Right cardiac atrium (tissue), 5 donors: ENCODE measurements at regions of chr21 and their contacts with region 1.

Region 1: DNA sequence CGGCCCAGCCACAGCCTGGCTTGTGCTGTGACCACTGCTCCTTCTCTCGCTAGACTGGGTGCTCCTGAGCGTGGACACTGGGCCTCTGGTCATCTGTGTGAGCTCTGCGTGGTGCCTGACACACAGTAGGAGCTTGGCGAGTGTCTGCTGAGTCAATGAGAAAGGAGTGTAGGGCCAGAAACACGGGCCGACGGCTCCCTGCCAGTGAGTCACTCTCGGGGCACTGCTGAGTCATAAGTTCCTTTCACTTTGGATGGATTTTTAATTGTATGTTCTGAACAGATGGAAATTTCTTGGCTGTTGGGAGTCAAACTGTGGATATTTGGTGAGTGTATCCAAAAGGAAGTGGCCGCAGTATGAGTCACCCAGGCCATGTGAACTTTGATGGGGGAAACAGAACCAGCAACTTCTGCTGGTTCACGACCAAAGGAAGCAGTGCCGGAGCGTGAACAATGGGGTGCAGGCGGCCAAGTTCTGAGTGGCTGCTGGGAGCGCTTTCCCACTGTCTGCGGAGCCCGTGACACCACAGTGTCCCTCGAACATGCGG is 41.0 kb upstream of the COL18A1 start:
- DNase-seq: peak; percentile 92 to 95 (median 93)
- ATAC-seq: peak; percentile 81 to 85
- H3K4me3 ChIP-seq: no peak overlapping the region
- H3K27ac ChIP-seq: peak overlapping the region; percentile 97
- H3K4me1 ChIP-seq: peaks cover 9% of the 10 kb centered on the region
- H3K27me3 ChIP-seq: no peaks in the 10 kb centered on the region

Region 2: DNA sequence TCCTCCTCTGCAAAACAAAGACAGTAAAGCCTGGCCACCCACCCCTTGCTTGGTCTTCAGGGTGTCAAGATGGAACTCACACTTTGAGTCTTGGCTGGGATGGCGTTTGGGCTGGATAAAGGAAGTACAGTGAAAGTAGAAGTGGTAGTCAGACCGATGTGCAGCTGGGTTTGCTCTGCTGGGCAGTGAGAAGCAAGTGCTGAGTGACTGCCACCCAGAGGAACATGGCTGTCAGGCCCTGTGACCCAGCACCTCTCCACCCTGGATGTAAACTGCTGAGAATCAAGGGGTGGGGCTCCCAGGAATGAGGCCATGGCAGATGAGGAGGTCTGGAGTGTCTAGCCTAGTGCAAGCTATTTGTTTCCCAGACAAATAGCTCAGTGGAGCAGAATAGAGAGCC is 127.5 kb before region 1 on chr21:
- intact Hi-C with region 1: no loop called
- DNase-seq: no peak
- ATAC-seq: no peak
- H3K4me3 ChIP-seq: no peak overlapping the region
- H3K27ac ChIP-seq: no peak overlapping the region
- H3K4me1 ChIP-seq: no peaks in the 10 kb centered on the region
- H3K27me3 ChIP-seq: no peaks in the 10 kb centered on the region

Region 3: GRCh38 chr21:45302078-45303055 is 61.6 kb before region 1 on chr21:
- intact Hi-C with region 1: loop called in 2 of 4 experiments (anchors 5 kb)
- DNase-seq: peak; percentile 90 to 94 (median 93)
- ATAC-seq: peak; percentile 77 to 86
- H3K4me3 ChIP-seq: no peak overlapping the region
- H3K27ac ChIP-seq: peak overlapping the region; percentile 59
- H3K4me1 ChIP-seq: peaks cover 13% of the 10 kb centered on the region
- H3K27me3 ChIP-seq: no peaks in the 10 kb centered on the region

Region 4: GRCh38 chr21:45309069-45309986 is 54.7 kb before region 1 on chr21:
- intact Hi-C with region 1: loop called in 2 of 4 experiments (anchors 5 kb)
- DNase-seq: peak; percentile 81 to 91 (median 91)
- ATAC-seq: peak; percentile 23 to 59
- H3K4me3 ChIP-seq: no peak overlapping the region
- H3K27ac ChIP-seq: peak overlapping the region; percentile 14
- H3K4me1 ChIP-seq: peaks cover 3% of the 10 kb centered on the region
- H3K27me3 ChIP-seq: no peaks in the 10 kb centered on the region